ENCODE measurements at regions of chr1 and their contacts with region 1.

Region 1: DNA sequence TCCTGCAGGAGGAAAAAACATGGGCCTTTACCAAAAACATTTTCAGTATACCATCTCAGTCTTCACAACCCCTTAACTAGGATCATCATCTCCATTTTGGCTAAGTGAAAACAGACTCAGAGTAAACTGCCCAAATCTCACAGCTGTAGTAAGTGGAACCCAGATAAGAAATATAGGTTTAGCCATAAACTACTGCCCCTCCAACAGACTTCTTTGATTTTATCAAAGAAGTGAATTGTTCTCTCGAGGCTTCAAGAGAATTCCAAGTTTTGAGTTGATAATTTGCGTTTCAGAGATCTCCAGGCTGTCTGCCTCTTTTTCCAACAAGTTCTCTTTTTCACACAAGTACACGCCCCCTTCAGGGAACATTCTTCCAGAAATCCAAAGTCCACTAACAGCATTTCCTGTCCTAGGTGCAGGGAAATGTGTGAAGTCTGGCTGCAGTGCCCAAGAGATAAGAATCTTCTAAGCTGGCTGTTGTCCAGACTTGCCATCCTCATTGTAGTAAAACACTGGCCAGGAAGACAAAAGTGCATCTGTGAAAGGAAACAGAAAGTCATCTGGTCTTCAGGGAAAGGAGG is 30.8 kb downstream of the RNF19B start:
- DNase-seq: peak; percentile 95
- H3K4me3 ChIP-seq: no peak overlapping the region
- H3K27ac ChIP-seq: peak overlapping the region; percentile 33
- H3K4me1 ChIP-seq: peaks cover 21% of the 10 kb centered on the region
- H3K27me3 ChIP-seq: no peaks in the 10 kb centered on the region
- CTCF ChIP-seq: no peak
- POLR2A ChIP-seq: peak; percentile 16

Region 2: GRCh38 chr1:32666901-32667566 is 266.8 kb before region 1 on chr1:
- CTCF ChIA-PET with region 1: no interaction called
- POLR2A ChIA-PET with region 1: no interaction called
- dilution Hi-C with region 1: no loop called
- intact Hi-C with region 1: no loop called
- DNase-seq: no peak
- H3K4me3 ChIP-seq: no peak overlapping the region
- H3K27ac ChIP-seq: no peak overlapping the region
- H3K4me1 ChIP-seq: no peaks in the 10 kb centered on the region
- H3K27me3 ChIP-seq: no peaks in the 10 kb centered on the region
- CTCF ChIP-seq: no peak
- POLR2A ChIP-seq: no peak

Region 3: DNA sequence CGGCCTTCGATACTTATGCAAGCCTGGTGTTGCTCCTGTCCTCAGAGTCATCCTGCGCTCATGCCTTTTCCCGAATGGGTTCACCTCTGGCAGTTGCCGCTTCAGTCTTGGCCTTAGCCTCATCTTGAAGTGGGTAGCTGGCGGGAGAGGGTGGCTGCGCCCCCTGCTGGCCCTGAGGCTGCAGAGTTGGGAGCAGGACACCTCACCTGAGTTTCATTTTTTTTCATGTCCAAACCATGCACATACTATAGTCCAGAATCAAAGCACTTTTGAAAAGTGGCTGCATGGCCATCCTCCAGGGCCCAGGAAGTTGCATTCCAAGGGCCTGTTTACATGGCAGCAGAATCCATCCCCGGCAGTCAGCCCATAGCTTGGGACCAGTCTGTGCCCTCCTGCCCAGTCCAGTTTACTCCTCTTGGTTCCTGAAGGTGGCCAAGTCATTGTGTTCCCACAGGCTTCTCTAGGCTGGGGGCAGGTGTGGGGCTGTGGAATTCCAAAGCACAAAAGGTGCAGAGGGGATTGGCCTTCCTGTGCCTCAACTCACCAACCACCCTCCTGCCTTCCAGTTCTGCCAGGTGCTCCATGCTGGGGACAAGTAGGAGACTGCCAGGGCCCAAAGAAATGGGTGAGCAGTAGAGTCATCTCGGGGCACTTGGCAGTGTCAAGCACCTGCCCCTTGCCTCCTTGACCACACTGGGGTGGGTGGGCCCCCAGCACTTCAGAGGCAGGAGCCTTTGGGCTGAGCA is 160.6 kb before region 1 on chr1:
- CTCF ChIA-PET with region 1: no interaction called
- POLR2A ChIA-PET with region 1: no interaction called
- dilution Hi-C with region 1: no loop called
- intact Hi-C with region 1: no loop called
- DNase-seq: peak; percentile 66
- H3K4me3 ChIP-seq: no peak overlapping the region
- H3K27ac ChIP-seq: no peak overlapping the region
- H3K4me1 ChIP-seq: peaks cover 21% of the 10 kb centered on the region
- H3K27me3 ChIP-seq: no peaks in the 10 kb centered on the region
- CTCF ChIP-seq: peak; percentile 92 to 95
- POLR2A ChIP-seq: no peak

Region 4: DNA sequence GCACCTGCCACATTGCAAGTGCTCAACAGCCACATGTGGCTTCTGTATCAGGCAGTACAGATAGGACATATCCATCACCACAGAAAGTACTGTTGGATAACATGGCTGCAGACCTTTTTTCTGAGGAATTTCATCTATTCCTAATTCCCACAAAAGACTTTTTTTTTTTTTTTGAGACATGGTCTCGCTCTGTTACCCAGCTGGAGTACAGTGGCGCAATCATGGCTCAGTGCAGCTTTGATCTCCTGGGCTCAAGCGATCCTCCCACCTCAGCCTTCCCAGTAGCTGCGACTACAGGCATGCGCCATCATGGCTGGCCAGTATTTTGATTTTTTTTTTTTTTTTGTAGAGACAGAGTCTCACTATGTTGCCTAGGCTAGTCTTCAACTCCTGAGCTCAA is 150.0 kb before region 1 on chr1:
- CTCF ChIA-PET with region 1: no interaction called
- POLR2A ChIA-PET with region 1: no interaction called
- dilution Hi-C with region 1: no loop called
- intact Hi-C with region 1: no loop called
- DNase-seq: no peak
- H3K4me3 ChIP-seq: no peak overlapping the region
- H3K27ac ChIP-seq: no peak overlapping the region
- H3K4me1 ChIP-seq: peaks cover 18% of the 10 kb centered on the region
- H3K27me3 ChIP-seq: no peaks in the 10 kb centered on the region
- CTCF ChIP-seq: no peak
- POLR2A ChIP-seq: no peak

Region 5: GRCh38 chr1:32861904-32862695 is 71.7 kb before region 1 on chr1:
- CTCF ChIA-PET with region 1: no interaction called
- POLR2A ChIA-PET with region 1: no interaction called
- dilution Hi-C with region 1: no loop called
- intact Hi-C with region 1: no loop called
- DNase-seq: no peak
- H3K4me3 ChIP-seq: no peak overlapping the region
- H3K27ac ChIP-seq: no peak overlapping the region
- H3K4me1 ChIP-seq: peaks cover 9% of the 10 kb centered on the region
- H3K27me3 ChIP-seq: no peaks in the 10 kb centered on the region
- CTCF ChIP-seq: no peak
- POLR2A ChIP-seq: no peak

Region 6: GRCh38 chr1:32953495-32953894 is 19.7 kb after region 1 on chr1:
- CTCF ChIA-PET with region 1: interaction called, 50 read pairs
- POLR2A ChIA-PET with region 1: interaction called, 3 read pairs
- dilution Hi-C with region 1: no loop called
- intact Hi-C with region 1: loop called (anchors 1 kb)
- DNase-seq: peak; percentile 91
- H3K4me3 ChIP-seq: no peak overlapping the region
- H3K27ac ChIP-seq: peak overlapping the region; percentile 45
- H3K4me1 ChIP-seq: peaks cover 20% of the 10 kb centered on the region
- H3K27me3 ChIP-seq: no peaks in the 10 kb centered on the region
- CTCF ChIP-seq: no peak
- POLR2A ChIP-seq: no peak

Region 7: GRCh38 chr1:32981003-32981901 is 47.4 kb after region 1 on chr1:
- CTCF ChIA-PET with region 1: interaction called, 14 read pairs
- POLR2A ChIA-PET with region 1: interaction called, 4 read pairs
- dilution Hi-C with region 1: no loop called
- intact Hi-C with region 1: no loop called
- DNase-seq: peak; percentile 96
- H3K4me3 ChIP-seq: no peak overlapping the region
- H3K27ac ChIP-seq: peak overlapping the region; percentile 88
- H3K4me1 ChIP-seq: peaks cover 27% of the 10 kb centered on the region
- H3K27me3 ChIP-seq: no peaks in the 10 kb centered on the region
- CTCF ChIP-seq: no peak
- POLR2A ChIP-seq: no peak

Region 8: DNA sequence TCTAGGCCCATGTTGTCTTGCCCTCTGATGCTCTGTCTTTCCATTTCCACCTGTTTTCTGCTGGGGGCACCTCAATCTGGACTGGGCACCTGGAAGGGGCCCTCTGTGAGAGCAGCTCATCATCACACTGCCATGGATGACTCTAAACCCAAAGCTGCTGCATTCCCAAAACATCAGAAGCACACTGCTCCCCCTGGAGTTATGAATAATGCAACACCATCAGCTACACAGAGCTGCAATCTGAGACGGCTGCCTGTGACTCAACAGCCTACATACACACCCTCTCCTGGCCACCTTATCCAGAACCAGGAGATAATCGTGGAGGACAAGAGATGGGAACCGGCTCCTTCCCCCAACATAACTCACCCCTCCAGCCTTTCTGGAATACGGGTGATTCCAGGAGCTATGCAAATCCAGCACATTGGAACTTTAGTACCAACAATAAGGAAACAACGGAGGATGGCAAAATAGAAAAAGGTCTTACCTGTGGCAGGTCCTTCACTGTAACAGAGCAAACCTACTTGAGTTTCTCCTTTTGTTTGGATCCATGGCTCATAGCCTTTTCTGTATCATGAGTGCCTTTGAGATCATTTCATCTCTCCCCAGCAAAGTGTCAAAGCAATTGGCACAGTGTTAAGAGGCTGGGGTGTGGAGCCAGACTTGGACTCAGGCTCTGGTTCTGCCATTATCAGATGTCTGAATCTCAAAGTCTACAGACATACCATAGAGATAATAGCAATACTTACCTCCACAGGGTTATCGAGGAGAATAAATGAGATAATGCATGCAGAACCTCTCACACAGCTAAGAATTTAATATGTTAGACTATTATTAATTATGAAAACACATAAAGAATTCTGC is 73.6 kb after region 1 on chr1:
- CTCF ChIA-PET with region 1: interaction called, 340 read pairs
- POLR2A ChIA-PET with region 1: interaction called, 3 read pairs
- dilution Hi-C with region 1: no loop called
- intact Hi-C with region 1: loop called (anchors 1 kb)
- DNase-seq: peak; percentile 89
- H3K4me3 ChIP-seq: no peak overlapping the region
- H3K27ac ChIP-seq: no peak overlapping the region
- H3K4me1 ChIP-seq: peaks cover 41% of the 10 kb centered on the region
- H3K27me3 ChIP-seq: no peaks in the 10 kb centered on the region
- CTCF ChIP-seq: peak; percentile 60 to 62
- POLR2A ChIP-seq: peak; percentile 28

Region 9: DNA sequence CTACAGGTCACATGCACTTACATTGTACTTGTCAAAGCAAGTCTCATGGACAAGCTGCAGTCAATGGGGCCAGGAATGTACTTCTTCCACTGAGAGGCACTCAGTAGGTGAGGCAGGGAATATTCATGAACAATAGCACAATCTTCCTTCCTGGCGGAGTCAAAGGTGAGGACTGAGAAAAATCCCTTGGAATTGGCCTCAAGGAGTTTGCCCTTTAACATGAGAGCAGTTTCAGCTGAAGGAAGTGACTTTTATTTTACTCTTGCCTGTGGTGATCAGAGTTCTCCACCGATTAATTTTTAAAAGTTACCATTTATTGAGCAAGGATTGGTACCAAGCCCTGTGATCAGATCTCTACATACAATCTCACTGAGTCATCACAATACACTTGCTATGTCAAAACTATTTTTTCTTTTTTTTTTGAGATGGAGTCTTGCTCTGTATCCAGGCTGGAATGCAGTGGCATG is 114.0 kb after region 1 on chr1:
- CTCF ChIA-PET with region 1: interaction called, 72 read pairs
- POLR2A ChIA-PET with region 1: no interaction called
- dilution Hi-C with region 1: no loop called
- intact Hi-C with region 1: no loop called
- DNase-seq: no peak
- H3K4me3 ChIP-seq: no peak overlapping the region
- H3K27ac ChIP-seq: no peak overlapping the region
- H3K4me1 ChIP-seq: no peaks in the 10 kb centered on the region
- H3K27me3 ChIP-seq: no peaks in the 10 kb centered on the region
- CTCF ChIP-seq: no peak
- POLR2A ChIP-seq: no peak

Region 10: DNA sequence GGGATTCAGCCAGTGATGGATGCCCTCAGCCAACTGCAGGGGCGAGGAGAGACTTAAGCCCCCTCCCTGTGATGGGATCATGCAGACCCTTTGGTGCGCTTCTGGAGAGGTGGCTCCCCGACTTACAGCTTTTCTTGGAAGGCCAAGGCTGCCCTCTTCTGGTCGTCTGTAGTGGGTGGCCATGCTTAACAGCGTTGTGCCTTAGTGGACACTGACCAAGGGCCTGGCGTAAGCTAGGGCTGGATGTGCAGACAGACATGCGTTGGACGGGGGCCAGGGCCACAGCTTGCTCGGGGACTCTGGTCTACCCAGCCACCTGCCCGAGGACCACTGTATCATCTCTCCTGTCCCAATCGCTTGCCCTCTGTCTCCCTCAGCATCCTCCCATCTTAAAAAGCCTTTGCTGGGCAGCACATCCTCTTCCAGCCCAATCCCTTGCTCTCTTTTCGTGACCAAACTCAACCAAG is 152.6 kb after region 1 on chr1:
- CTCF ChIA-PET with region 1: interaction called, 28 read pairs
- POLR2A ChIA-PET with region 1: no interaction called
- dilution Hi-C with region 1: no loop called
- intact Hi-C with region 1: loop called (anchors 1 kb)
- DNase-seq: peak; percentile 77
- H3K4me3 ChIP-seq: no peak overlapping the region
- H3K27ac ChIP-seq: no peak overlapping the region
- H3K4me1 ChIP-seq: peaks cover 3% of the 10 kb centered on the region
- H3K27me3 ChIP-seq: peaks cover 11 to 22% of the 10 kb centered on the region in 2 experiments
- CTCF ChIP-seq: peak; percentile 71 to 91
- POLR2A ChIP-seq: no peak